ENCODE measurements at regions of chr12 and their contacts with region 1.

Region 1: DNA sequence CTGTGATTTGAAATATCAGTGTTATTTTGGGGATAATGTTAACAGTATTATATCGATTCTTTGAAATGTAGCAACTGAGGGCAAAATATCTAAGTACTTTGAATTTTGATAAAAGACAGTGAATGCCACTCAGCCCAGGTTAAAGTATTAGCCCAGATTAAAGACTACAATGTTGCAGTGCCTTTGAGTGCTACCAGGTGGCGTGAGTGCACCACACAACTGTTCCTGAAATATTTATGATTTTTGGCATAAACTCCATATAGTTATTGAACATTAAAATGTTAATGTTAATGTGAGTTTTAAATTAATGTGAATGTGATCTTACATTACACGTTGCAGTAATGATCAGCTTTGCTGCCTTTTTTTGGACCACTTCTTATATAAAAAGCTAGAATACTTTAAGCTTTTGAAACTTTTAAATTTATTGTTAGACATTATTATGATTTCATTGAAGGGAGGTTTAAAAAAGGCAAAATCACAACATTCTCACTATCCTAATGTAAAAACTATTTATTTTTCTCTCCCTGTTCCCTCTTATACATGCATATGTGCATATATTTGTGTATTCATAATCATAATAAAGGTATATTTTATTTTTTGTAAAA is 22.5 kb downstream of the MRPS35 start:
- DNase-seq: peak in 1 of 6 donors; percentile 48
- ATAC-seq: peak; percentile 67 to 92 (median 87)
- H3K4me3 ChIP-seq: no peak overlapping the region
- H3K27ac ChIP-seq: no peak overlapping the region
- H3K4me1 ChIP-seq: no peaks in the 10 kb centered on the region
- H3K27me3 ChIP-seq: no peaks in the 10 kb centered on the region
- CTCF ChIP-seq: peak; percentile 24 to 62 (median 58)

Region 2: GRCh38 chr12:27821259-27821973 is 88.3 kb after region 1 on chr12:
- intact Hi-C with region 1: loop called in 1 of 3 experiments (anchors 10 kb)
- DNase-seq: peak in 3 of 6 donors; percentile 30 to 52 (median 41)
- ATAC-seq: peak; percentile 77 to 86 (median 84)
- H3K4me3 ChIP-seq: no peak overlapping the region
- H3K27ac ChIP-seq: no peak overlapping the region
- H3K4me1 ChIP-seq: peaks cover 0 to 11% (median 8%) of the 10 kb centered on the region in 3 donors
- H3K27me3 ChIP-seq: no peaks in the 10 kb centered on the region
- CTCF ChIP-seq: peak; percentile 51 to 72 (median 61)

Region 3: GRCh38 chr12:27931390-27931789 is 198.2 kb after region 1 on chr12:
- intact Hi-C with region 1: loop called in 1 of 3 experiments (anchors 5 kb)
- DNase-seq: no peak
- ATAC-seq: no peak
- H3K4me3 ChIP-seq: no peak overlapping the region
- H3K27ac ChIP-seq: no peak overlapping the region
- H3K4me1 ChIP-seq: no peaks in the 10 kb centered on the region
- H3K27me3 ChIP-seq: no peaks in the 10 kb centered on the region
- CTCF ChIP-seq: no peak

Region 4: DNA sequence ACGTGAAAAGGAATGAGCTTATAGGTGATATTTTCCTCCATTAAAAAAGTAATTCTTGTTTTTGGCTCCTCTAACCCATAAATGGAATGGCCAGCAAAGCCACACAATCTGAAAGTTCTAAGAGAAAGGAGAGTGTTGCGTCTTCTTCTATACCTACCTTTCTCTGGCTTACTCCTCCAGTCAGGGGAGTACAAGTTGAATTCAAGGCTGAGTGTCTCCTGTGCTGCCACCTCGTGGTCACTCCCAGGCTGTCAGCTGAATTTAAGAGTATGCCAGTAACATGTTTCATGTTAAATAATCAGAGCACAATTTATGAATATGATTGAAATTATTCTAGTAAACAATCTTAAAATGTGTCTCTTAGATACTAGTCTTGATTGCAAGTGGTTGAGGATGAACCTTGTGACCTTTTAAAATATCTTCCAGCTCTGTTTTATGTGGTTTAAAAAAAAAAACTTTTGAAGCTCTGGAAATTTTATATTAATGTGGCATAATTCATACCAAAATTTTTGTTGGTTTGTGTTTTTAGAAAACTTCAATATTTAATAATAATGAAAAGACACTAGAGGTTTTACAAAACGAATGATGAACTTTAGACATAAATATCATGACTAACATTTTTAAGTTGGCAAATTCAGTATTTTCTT is 207.7 kb after region 1 on chr12:
- intact Hi-C with region 1: loop called in 2 of 3 experiments (anchors 5 to 10 kb)
- DNase-seq: peak; percentile 37 to 82 (median 60)
- ATAC-seq: peak; percentile 63 to 97 (median 92)
- H3K4me3 ChIP-seq: no peak overlapping the region
- H3K27ac ChIP-seq: no peak overlapping the region
- H3K4me1 ChIP-seq: no peaks in the 10 kb centered on the region
- H3K27me3 ChIP-seq: no peaks in the 10 kb centered on the region
- CTCF ChIP-seq: peak; percentile 36 to 79 (median 68)

Region 5: DNA sequence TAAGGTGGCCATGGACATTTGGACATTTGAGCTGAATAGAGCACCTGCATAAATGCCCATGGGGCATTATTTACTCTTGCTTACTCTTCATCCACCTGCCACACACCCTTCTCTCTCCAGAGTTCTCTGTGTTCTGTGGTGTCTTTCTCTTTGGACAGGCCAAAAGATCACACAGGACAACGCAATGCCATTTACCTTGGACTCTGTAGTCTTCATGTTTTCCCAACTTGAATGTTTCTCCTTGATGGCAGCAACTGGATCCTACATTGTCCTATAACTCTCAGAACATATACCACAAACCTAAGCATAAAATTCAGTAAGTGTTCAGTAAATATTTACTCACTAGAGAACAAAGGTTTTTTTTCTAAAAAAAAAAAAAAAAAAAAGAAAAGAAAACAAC is 281.0 kb after region 1 on chr12:
- intact Hi-C with region 1: no loop called
- DNase-seq: no peak
- ATAC-seq: no peak
- H3K4me3 ChIP-seq: no peak overlapping the region
- H3K27ac ChIP-seq: no peak overlapping the region
- H3K4me1 ChIP-seq: no peaks in the 10 kb centered on the region
- H3K27me3 ChIP-seq: no peaks in the 10 kb centered on the region
- CTCF ChIP-seq: no peak

Region 6: GRCh38 chr12:28872654-28873268 is 1139.6 kb after region 1 on chr12:
- intact Hi-C with region 1: loop called in 1 of 3 experiments (anchors 10 kb)
- DNase-seq: peak in 5 of 6 donors; percentile 30 to 58 (median 38)
- ATAC-seq: peak; percentile 75 to 88 (median 84)
- H3K4me3 ChIP-seq: no peak overlapping the region
- H3K27ac ChIP-seq: no peak overlapping the region
- H3K4me1 ChIP-seq: no peaks in the 10 kb centered on the region
- H3K27me3 ChIP-seq: no peaks in the 10 kb centered on the region
- CTCF ChIP-seq: peak; percentile 29 to 51 (median 48)